ENCODE measurements at regions of chr9 and their contacts with region 1.

Region 1: DNA sequence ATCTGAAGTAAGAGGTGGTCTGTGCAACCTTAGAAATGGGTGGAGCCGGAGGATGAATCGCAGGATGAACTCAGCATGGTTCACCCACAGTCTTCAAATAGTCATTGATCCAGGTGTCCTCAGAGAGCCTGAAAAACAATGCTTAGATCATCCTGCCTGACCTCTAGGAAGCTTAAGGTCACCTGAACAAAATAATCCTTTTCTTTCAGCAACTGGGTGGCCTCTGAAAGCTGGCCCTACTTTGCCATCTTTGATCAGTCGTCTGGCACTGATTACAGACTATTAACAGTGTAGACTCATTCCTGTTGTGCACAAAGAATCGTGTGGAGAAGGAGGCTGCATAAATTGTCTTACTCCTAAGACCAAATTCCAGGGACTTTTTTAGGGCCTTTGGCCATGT is 50.7 kb downstream of the PIP5K1B start:
- DNase-seq: no peak
- H3K4me3 ChIP-seq: no peak overlapping the region
- H3K27ac ChIP-seq: no peak overlapping the region
- H3K4me1 ChIP-seq: no peaks in the 10 kb centered on the region
- H3K27me3 ChIP-seq: no peaks in the 10 kb centered on the region
- CTCF ChIP-seq: no peak
- POLR2A ChIP-seq: no peak

Region 2: DNA sequence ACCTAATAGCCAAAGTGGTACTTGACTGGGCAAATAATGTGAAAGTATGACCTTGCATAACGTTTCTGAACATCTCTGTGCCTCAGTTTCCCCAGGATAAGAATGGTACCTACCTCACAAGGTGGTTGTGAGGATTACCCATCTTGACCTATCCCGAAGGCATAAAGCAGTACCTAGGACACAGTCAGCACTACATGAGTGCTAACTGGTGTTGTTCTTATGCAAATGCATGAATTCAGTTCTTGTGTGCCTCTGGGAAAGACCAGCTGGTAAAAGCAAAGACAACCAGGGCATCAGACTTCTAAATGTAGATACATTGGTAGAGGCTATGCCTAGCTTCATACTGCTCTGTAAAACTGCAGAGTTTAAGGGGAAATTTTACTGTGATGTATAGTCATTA is 193.3 kb before region 1 on chr9:
- intact Hi-C with region 1: no loop called
- DNase-seq: no peak
- H3K4me3 ChIP-seq: no peak overlapping the region
- H3K27ac ChIP-seq: no peak overlapping the region
- H3K4me1 ChIP-seq: peaks cover 5% of the 10 kb centered on the region
- H3K27me3 ChIP-seq: no peaks in the 10 kb centered on the region
- CTCF ChIP-seq: no peak
- POLR2A ChIP-seq: no peak

Region 3: DNA sequence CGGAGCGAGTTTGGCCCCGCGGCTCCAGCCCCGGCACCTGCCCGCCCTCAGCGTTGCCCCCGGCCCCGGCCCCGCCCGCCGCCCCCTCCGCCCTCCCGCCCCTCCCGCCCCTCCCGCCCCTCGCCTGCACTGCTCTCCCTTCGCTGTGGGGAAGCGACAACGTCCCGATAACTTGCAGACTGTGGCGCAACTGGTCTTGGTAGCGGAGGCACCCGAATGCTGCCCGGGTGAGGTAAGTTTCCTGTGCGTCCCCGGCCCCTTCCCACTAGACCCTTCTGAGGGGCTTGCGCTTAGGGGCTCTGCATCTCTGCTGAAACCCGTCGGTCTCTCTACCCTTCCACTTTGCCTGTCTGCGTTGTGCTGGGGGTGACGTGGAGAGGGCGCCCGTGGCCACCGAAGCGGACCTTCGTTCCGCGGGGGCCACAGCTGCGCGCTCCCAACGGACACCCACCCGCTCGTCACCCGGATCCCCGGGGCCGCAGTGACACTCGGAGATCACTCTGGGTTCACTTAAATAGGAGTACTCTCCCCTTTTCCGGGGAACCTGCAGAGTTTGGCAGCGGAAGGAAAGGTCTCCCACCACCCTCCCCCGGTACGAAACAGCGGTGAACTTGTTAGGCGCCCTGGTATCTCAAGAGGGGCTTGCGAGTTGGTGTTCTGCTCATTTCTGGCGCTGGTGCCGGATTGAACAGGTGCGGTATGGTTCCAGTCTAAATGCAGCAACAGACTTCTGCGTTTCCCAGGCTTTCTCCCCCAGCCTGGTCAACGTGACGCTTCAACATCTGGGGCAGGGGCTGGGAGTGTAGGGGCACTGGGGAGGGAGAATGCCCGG is 50.0 kb before region 1 on chr9:
- intact Hi-C with region 1: loop called (anchors 2 kb)
- DNase-seq: no peak
- H3K4me3 ChIP-seq: peak overlapping the region; percentile 49 to 63
- H3K27ac ChIP-seq: peak overlapping the region; percentile 47
- H3K4me1 ChIP-seq: peaks cover 7% of the 10 kb centered on the region
- H3K27me3 ChIP-seq: no peaks in the 10 kb centered on the region
- CTCF ChIP-seq: no peak
- POLR2A ChIP-seq: no peak

Measured in vagina (tissue), 2 donors.